Gastrocnemius medialis (tissue), 4 donors: ENCODE measurements at regions of chr2 and their contacts with region 1.

Region 1: GRCh38 chr2:43495727-43496126 is 100.1 kb downstream of the THADA start:
- DNase-seq: no peak
- ATAC-seq: no peak
- H3K4me3 ChIP-seq: no peak overlapping the region
- H3K27ac ChIP-seq: no peak overlapping the region
- H3K4me1 ChIP-seq: no peaks in the 10 kb centered on the region
- H3K27me3 ChIP-seq: no peaks in the 10 kb centered on the region
- CTCF ChIP-seq: no peak
- POLR2A ChIP-seq: no peak

Region 2: GRCh38 chr2:43075054-43075593 is 420.6 kb before region 1 on chr2:
- in situ Hi-C with region 1: no loop called
- intact Hi-C with region 1: no loop called
- DNase-seq: peak; percentile 76 to 77
- ATAC-seq: peak; percentile 77 to 87
- H3K4me3 ChIP-seq: no peak overlapping the region
- H3K27ac ChIP-seq: peak overlapping the region; percentile 80 to 81 (median 80)
- H3K4me1 ChIP-seq: peaks cover 55 to 64% of the 10 kb centered on the region in 2 donors
- H3K27me3 ChIP-seq: no peaks in the 10 kb centered on the region
- CTCF ChIP-seq: peak in 2 of 5 experiments; percentile 20 to 28
- POLR2A ChIP-seq: no peak

Region 3: DNA sequence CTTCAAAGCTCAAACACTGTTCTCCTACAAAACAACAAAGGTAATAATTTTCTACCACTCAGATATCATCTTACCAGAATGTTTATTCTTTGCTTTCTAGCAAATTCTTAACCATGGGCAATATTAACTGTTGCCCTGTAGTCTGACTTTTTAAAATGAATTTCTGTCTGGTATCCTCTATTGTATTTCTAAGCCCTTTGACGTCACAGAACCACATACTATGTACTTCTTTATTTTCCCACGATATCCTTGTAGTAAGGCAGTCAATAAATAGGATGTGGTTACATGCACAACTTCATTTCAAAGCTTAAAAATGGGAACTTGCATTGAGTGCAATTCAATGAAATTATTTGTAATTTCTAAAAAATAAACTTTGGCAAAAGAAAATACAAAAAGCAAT is 41.4 kb after region 1 on chr2:
- in situ Hi-C with region 1: loop called in 1 of 4 experiments (anchors 5 kb)
- intact Hi-C with region 1: no loop called
- DNase-seq: no peak
- ATAC-seq: no peak
- H3K4me3 ChIP-seq: no peak overlapping the region
- H3K27ac ChIP-seq: no peak overlapping the region
- H3K4me1 ChIP-seq: peaks cover 6 to 11% of the 10 kb centered on the region in 2 donors
- H3K27me3 ChIP-seq: no peaks in the 10 kb centered on the region
- CTCF ChIP-seq: no peak
- POLR2A ChIP-seq: no peak